Dendritic cell treated with granulocyte-macrophage colony-stimulating factor and Interleukin-4, amounts not matched to agents 40 ng/mL and 50 ng/mL, for 4 days (primary cell): ENCODE measurements at regions of chr1 and their contacts with region 1.

Region 1: DNA sequence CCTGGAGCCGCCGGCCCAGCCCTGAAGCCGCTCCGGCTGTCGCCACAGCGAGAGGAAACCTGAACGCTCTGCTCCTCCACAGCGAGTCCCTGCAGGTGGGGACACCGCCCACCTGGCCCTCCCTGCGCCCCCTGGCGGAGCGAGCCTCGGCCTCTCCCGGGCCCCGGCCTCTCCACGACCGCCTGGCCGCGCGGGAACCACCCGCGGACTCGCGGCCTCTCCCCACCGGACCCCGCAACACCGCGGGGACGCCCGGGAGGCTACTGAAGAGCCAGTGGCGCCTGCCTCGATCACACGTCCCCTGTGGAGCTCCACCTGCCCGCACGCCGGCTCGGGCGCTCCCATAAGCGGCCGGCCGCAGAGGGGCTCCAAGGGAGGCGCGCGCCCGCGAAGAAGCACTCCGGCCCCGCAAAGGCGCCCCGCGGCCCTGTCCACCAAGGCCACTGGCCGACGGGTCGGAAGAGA is 109.6 kb downstream of the KCNN3 start:
- H3K4me3 Mint-ChIP-seq: peak overlapping the region; percentile 60
- H3K27ac Mint-ChIP-seq: no peak overlapping the region
- H3K4me1 Mint-ChIP-seq: peaks cover 19% of the 10 kb centered on the region
- H3K27me3 Mint-ChIP-seq: peaks cover 61% of the 10 kb centered on the region

Region 2: GRCh38 chr1:154607609-154608396 is 152.7 kb before region 1 on chr1 and contains the start of gene ADAR:
- intact Hi-C with region 1: no loop called
- H3K4me3 Mint-ChIP-seq: peak within 1 kb of the TSS; percentile 95
- H3K27ac Mint-ChIP-seq: peak within 1 kb of the TSS; percentile 97
- H3K4me1 Mint-ChIP-seq: peaks cover 75% of the 10 kb centered on the region
- H3K27me3 Mint-ChIP-seq: no peaks in the 10 kb centered on the region

Region 3: DNA sequence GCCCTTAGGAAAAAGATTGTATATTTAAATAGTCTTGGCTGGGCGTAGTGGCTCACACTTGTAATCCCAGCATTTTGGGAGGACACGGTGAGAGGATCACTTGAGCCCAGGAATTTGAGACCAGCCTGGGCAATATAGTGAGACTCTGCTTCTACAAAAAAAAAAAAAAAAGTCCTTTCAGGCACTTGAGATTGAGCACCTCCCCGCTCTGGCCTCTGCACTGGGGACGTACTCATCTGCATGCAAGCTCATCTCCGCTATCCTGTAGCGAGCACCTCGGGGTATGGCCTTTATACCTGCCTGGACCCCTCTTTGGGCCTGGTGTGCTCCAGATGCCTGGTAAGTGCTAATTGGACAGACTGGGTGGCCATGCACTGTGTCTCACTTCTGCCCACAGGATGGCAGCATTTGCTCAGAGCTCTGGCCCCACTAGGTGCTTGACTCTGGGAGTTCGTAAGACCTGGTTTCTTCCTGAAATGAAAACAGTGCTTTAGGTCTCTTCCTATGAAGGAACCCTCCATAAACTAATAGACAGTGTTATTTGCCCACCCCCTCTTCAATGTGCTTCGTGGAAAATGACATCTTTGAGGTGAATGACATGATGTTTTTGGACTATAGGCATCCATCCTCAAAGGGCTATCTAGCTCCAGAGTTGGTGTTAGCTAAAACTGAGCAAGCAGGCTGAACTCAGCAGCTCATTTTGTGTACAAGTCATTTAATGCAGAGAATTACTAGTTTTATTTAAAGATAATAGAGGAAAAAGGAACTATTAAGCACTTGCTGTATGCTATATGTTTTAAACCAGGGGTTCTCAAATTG is 90.8 kb before region 1 on chr1:
- intact Hi-C with region 1: loop called (anchors 5 kb)
- H3K4me3 Mint-ChIP-seq: no peak overlapping the region
- H3K27ac Mint-ChIP-seq: no peak overlapping the region
- H3K4me1 Mint-ChIP-seq: peaks cover 2% of the 10 kb centered on the region
- H3K27me3 Mint-ChIP-seq: peaks cover 5% of the 10 kb centered on the region

Region 4: DNA sequence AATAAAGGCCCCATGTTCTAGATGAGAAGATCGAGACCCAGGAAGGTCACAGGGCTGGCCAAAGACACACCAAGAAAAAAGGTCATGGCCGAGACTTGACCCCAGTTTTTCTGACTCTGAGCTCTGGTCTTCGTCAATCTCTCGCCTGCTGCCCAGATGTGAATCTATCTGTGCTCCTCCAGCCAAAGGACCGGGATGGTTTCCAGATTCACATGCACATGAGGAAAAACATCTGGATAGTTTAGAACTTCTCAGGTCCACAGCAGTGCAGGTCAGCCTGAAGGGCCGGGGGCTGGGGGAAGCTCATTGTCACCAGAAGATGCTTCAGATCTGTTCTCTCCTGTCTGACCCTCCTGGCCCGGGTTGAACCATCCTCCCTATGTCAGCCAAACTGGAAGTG is 60.6 kb after region 1 on chr1:
- intact Hi-C with region 1: no loop called
- H3K4me3 Mint-ChIP-seq: no peak overlapping the region
- H3K27ac Mint-ChIP-seq: no peak overlapping the region
- H3K4me1 Mint-ChIP-seq: peaks cover 15% of the 10 kb centered on the region
- H3K27me3 Mint-ChIP-seq: peaks cover 2% of the 10 kb centered on the region

Region 5: DNA sequence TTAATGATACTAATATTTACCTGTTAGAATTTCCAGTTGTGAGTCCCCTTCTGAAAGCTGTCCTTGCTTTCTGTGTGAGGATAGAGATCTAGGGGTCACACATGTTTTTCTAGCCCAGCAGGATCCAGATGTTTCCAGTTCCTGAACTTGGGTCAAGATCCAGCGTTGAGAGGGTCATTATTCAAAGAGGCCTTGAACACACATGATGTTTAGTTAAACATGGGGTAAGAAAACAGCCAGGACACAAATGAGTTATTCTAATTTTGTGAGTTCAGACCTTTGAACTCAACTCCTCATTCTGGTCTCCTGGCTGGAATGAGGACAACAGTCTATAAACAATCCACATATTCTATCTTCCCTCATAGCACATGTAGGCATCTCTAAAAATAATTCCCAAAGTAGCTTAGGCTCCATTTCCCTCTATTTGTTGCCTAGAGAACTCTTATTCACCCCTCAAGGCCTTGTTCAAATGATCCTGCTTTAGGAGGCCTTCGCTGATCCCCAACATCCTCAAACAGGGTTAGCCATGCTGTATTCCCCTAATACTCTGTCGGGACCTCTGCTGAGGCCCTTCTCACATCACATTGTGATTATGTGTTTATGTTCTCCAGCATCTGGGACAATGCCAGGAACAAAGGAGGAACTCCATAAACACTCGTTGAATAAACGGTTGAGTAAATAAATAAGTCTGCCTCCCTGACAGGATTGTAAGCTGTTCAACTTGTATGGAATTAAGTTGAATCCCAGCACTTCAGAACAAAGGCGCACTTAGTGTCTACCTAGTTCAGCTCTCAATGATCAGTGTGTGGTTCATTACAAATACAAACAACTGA is 124.6 kb after region 1 on chr1:
- intact Hi-C with region 1: loop called (anchors 10 kb)
- H3K4me3 Mint-ChIP-seq: no peak overlapping the region
- H3K27ac Mint-ChIP-seq: no peak overlapping the region
- H3K4me1 Mint-ChIP-seq: no peaks in the 10 kb centered on the region
- H3K27me3 Mint-ChIP-seq: peaks cover 8% of the 10 kb centered on the region